Activated CD4-positive, alpha-beta memory T cell treated with anti-CD3 and anti-CD28 coated beads, Interleukin-2, amount 10 ng/mL, durations not matched to agents 7 days and 5 days (primary cell): ENCODE measurements at regions of chr19 and their contacts with region 1.

Region 1: GRCh38 chr19:12639901-12640613 is 26.5 kb downstream of the MAN2B1 start:
- DNase-seq: peak; percentile 87
- H3K4me3 Mint-ChIP-seq: peak overlapping the region; percentile 58
- H3K27ac Mint-ChIP-seq: peak overlapping the region; percentile 33
- H3K4me1 Mint-ChIP-seq: peaks cover 15% of the 10 kb centered on the region
- H3K27me3 Mint-ChIP-seq: no peaks in the 10 kb centered on the region

Region 2: GRCh38 chr19:12628040-12629022 is 11.7 kb before region 1 on chr19:
- CTCF ChIA-PET with region 1: interaction called, 11 read pairs
- POLR2A ChIA-PET with region 1: no interaction called
- DNase-seq: no peak
- H3K4me3 Mint-ChIP-seq: no peak overlapping the region
- H3K27ac Mint-ChIP-seq: no peak overlapping the region
- H3K4me1 Mint-ChIP-seq: no peaks in the 10 kb centered on the region
- H3K27me3 Mint-ChIP-seq: no peaks in the 10 kb centered on the region